Endothelial cell of umbilical vein (primary cell): ENCODE measurements at regions of chr16 and their contacts with region 1.

Region 1: DNA sequence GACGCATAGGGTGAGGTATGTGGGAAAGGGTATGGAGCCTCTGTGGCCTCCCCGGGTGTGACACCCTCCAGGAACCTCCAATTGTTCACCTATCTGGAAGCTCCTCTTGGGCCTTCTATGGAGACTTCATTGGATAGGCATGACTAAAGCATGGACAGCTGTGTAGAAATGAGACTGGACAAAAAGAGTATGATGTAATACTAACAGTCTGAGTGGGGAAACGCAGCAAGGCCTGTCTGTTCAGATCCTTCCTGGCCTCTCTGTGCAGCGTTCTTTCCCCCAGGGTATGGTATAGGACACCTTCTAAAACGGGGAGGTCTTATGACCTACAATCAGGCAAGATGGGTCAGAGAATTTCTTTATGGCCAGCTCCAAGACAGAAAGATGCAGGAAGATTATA is 30.7 kb upstream of the CCNF start:
- DNase-seq: no peak
- H3K4me3 ChIP-seq: no peak overlapping the region
- H3K27ac ChIP-seq: no peak overlapping the region
- H3K4me1 ChIP-seq: no peaks in the 10 kb centered on the region
- H3K27me3 ChIP-seq: peaks cover 10 to 18% of the 10 kb centered on the region in 2 experiments
- CTCF ChIP-seq: no peak
- POLR2A ChIP-seq: no peak

Region 2: DNA sequence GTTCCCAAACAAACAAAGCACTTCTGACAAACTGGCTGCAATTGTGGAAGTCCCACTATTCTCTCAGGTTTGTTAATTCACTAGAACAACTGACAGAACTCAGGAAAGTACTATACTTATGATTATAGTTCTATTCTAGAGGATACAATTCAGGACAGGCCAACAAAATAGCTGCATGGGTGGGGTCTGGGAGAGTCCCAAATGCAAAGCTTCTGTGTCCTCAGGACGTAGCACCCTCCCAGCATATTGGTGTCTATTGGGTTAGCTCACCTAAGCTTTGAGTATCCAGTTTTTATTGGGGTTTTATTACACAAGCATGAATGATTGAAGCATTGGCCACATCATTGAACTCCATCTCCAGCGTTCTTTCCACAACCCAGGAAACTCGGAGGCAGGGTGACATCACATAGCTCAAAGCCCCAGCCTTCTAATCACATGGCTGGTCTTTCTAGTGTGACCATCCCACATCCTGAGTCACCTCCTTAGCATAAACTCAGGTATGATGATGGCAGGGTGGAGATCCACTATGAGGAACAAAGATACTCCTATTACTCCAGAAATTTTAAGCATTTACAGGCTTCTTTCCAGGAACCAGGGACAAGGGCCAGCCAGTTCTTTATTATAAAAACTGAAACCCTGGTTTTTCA is 13.2 kb before region 1 on chr16:
- CTCF ChIA-PET with region 1: interaction called, 4 read pairs
- POLR2A ChIA-PET with region 1: no interaction called
- dilution Hi-C with region 1: no loop called
- intact Hi-C with region 1: loop called (anchors 2 kb)
- DNase-seq: no peak
- H3K4me3 ChIP-seq: no peak overlapping the region
- H3K27ac ChIP-seq: no peak overlapping the region
- H3K4me1 ChIP-seq: no peaks in the 10 kb centered on the region
- H3K27me3 ChIP-seq: peaks cover 2 to 5% of the 10 kb centered on the region in 2 experiments
- CTCF ChIP-seq: no peak
- POLR2A ChIP-seq: no peak

Region 3: GRCh38 chr16:2474877-2475412 is 76.4 kb after region 1 on chr16 and contains the start of gene TBC1D24:
- CTCF ChIA-PET with region 1: no interaction called
- POLR2A ChIA-PET with region 1: no interaction called
- dilution Hi-C with region 1: no loop called
- intact Hi-C with region 1: no loop called
- DNase-seq: peak; percentile 82
- H3K4me3 ChIP-seq: peak within 1 kb of the TSS; percentile 33 to 72 (median 69)
- H3K27ac ChIP-seq: peak within 1 kb of the TSS; percentile 8
- H3K4me1 ChIP-seq: peaks cover 10% of the 10 kb centered on the region
- H3K27me3 ChIP-seq: peaks cover 11 to 19% of the 10 kb centered on the region in 2 experiments
- CTCF ChIP-seq: no peak
- POLR2A ChIP-seq: peak; percentile 92
- total RNA-seq, gene TBC1D24: 17.3 and 22.8 TPM in 2 replicates